ENCODE measurements at regions of chr16 and their contacts with region 1.

Region 1: DNA sequence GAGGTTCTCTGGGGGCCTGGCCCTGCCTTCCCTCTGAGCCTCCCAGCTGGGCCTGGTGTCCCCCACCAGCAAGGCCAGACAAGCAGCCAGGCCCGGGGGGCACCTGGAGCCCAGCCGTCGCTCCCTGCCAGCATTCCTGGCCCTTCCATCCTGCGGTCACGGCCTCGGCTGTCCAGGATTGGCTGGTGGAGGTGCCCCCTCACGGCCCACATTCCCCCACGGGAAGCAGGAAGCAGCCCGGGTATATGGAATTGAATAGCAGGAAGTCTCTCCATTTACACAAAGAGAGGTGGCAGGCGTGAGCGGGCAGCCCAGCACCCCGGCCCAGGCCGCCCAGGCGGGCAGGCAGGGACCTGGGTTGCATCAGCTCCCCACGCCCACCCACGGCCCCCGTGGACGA is 14.5 kb downstream of the TRAF7 start:
- DNase-seq: no peak
- H3K4me3 ChIP-seq: no peak overlapping the region
- H3K27ac ChIP-seq: no peak overlapping the region; the same call in 1 of the 2 replicates
- H3K4me1 ChIP-seq: no peaks in the 10 kb centered on the region; a peak in 1 of 7 replicates
- H3K27me3 ChIP-seq: no peaks in the 10 kb centered on the region
- CTCF ChIP-seq: no peak
- EP300 ChIP-seq: no peak
- POLR2A ChIP-seq: no peak
- RAD21 ChIP-seq: no peak

Region 2: GRCh38 chr16:2183671-2184070 is 13.6 kb after region 1 on chr16:
- CTCF ChIA-PET with region 1: no interaction called
- POLR2A ChIA-PET with region 1: interaction called, 18 read pairs
- DNase-seq: no peak
- H3K4me3 ChIP-seq: no peak overlapping the region
- H3K27ac ChIP-seq: no peak overlapping the region
- H3K4me1 ChIP-seq: peaks cover 0 to 7% (median 2%) of the 10 kb centered on the region in 4 experiments; a peak in 4 of 7 replicates
- H3K27me3 ChIP-seq: no peaks in the 10 kb centered on the region; a peak in 1 of 7 replicates
- CTCF ChIP-seq: no peak
- EP300 ChIP-seq: no peak
- POLR2A ChIP-seq: no peak
- RAD21 ChIP-seq: no peak

Measured in H1 (cell line).